ENCODE measurements at regions of chr20 and their contacts with region 1.

Region 1: GRCh38 chr20:22575087-22575721 is 9.2 kb downstream of the FOXA2 start:
- DNase-seq: no peak
- ATAC-seq: no peak
- H3K4me3 Mint-ChIP-seq: no peak overlapping the region
- H3K27ac Mint-ChIP-seq: no peak overlapping the region
- H3K4me1 Mint-ChIP-seq: no peaks in the 10 kb centered on the region
- H3K27me3 Mint-ChIP-seq: peaks cover 69% of the 10 kb centered on the region

Region 2: GRCh38 chr20:21105429-21106170 is 1469.6 kb before region 1 on chr20:
- CTCF ChIA-PET with region 1: no interaction called
- POLR2A ChIA-PET with region 1: no interaction called
- intact Hi-C with region 1: loop called (anchors 5 to 10 kb)
- DNase-seq: peak; percentile 31
- ATAC-seq: no peak
- H3K4me3 Mint-ChIP-seq: no peak overlapping the region
- H3K27ac Mint-ChIP-seq: no peak overlapping the region
- H3K4me1 Mint-ChIP-seq: peaks cover 23% of the 10 kb centered on the region
- H3K27me3 Mint-ChIP-seq: peaks cover 62% of the 10 kb centered on the region

Region 3: GRCh38 chr20:21395666-21396598 is 1179.3 kb before region 1 on chr20:
- CTCF ChIA-PET with region 1: no interaction called
- POLR2A ChIA-PET with region 1: no interaction called
- intact Hi-C with region 1: loop called in 1 of 2 experiments (anchors 10 kb)
- DNase-seq: peak; percentile 67
- ATAC-seq: peak; percentile 76
- H3K4me3 Mint-ChIP-seq: peak overlapping the region; percentile 40
- H3K27ac Mint-ChIP-seq: no peak overlapping the region
- H3K4me1 Mint-ChIP-seq: peaks cover 24% of the 10 kb centered on the region
- H3K27me3 Mint-ChIP-seq: peaks cover 62% of the 10 kb centered on the region

Region 4: DNA sequence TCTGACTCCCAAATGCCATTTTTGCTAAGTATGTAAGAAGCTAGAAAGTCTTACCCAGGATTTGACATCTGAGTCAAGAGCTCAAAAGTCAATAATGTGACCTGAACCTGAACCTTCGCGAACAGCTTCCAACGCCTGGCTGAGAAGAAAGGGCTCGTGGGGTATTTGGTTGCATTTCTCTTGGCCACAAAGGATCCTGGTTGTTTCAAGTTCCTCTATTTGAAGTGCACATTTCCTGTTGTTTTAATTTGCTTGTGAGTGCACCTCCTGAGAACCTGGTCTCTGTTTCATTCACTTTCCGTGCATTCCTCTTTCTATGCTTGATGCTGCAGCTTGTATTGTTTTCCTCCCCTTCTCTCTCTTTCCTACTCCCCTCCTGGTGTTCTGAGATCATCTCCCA is 203.4 kb before region 1 on chr20:
- CTCF ChIA-PET with region 1: no interaction called
- POLR2A ChIA-PET with region 1: no interaction called
- intact Hi-C with region 1: loop called in 1 of 2 experiments (anchors 10 kb)
- DNase-seq: no peak
- ATAC-seq: no peak
- H3K4me3 Mint-ChIP-seq: no peak overlapping the region
- H3K27ac Mint-ChIP-seq: no peak overlapping the region
- H3K4me1 Mint-ChIP-seq: peaks cover 17% of the 10 kb centered on the region
- H3K27me3 Mint-ChIP-seq: no peaks in the 10 kb centered on the region

Measured in activated CD4-positive, alpha-beta T cell treated with anti-CD3 and anti-CD28 coated beads for 36 hours (primary cell).